Heart left ventricle (tissue), 16 donors: ENCODE measurements at regions of chr12 and their contacts with region 1.

Region 1: GRCh38 chr12:93591137-93591868 is 18.8 kb downstream of the SOCS2 start:
- DNase-seq: peak; percentile 87 to 91 (median 89)
- ATAC-seq: peak; percentile 81 to 97 (median 94)
- H3K4me3 ChIP-seq: peak overlapping the region; percentile 38 to 72 (median 59)
- H3K27ac ChIP-seq: peak overlapping the region; percentile 74 to 96 (median 88)
- H3K4me1 ChIP-seq: peaks cover 0 to 48% (median 18%) of the 10 kb centered on the region in 12 donors
- H3K27me3 ChIP-seq: no peaks in the 10 kb centered on the region
- CTCF ChIP-seq: no peak
- POLR2A ChIP-seq: peak in 1 of 2 donors; percentile 72

Region 2: GRCh38 chr12:93577222-93577795 is 14.0 kb before region 1 on chr12:
- intact Hi-C with region 1: loop called in 8 of 10 experiments (anchors 1 to 2 kb)
- DNase-seq: no peak
- ATAC-seq: no peak
- H3K4me3 ChIP-seq: peak overlapping the region in 2 of 12 donors; percentile 66 to 71
- H3K27ac ChIP-seq: peak overlapping the region in 4 of 12 donors; percentile 21 to 98 (median 29)
- H3K4me1 ChIP-seq: peaks cover 0 to 66% (median 41%) of the 10 kb centered on the region in 12 donors
- H3K27me3 ChIP-seq: peaks cover 0 to 26% (median 0%) of the 10 kb centered on the region in 9 donors
- CTCF ChIP-seq: no peak
- POLR2A ChIP-seq: no peak

Region 3: GRCh38 chr12:93677195-93678064 is 86.1 kb after region 1 on chr12 and contains the start of gene CRADD:
- intact Hi-C with region 1: loop called in 7 of 10 experiments (anchors 5 kb)
- DNase-seq: peak; percentile 79 to 90 (median 83)
- ATAC-seq: peak; percentile 86 to 94 (median 92)
- H3K4me3 ChIP-seq: peak within 1 kb of the TSS; percentile 36 to 84 (median 70)
- H3K27ac ChIP-seq: peak within 1 kb of the TSS; percentile 84 to 100 (median 97)
- H3K4me1 ChIP-seq: peaks cover 0 to 52% (median 24%) of the 10 kb centered on the region in 12 donors
- H3K27me3 ChIP-seq: no peaks in the 10 kb centered on the region
- CTCF ChIP-seq: no peak
- POLR2A ChIP-seq: peak in 1 of 2 donors; percentile 73
- total RNA-seq, gene CRADD: 40.1 to 100 (median 56.1) TPM

Region 4: GRCh38 chr12:93742110-93742934 is 151.0 kb after region 1 on chr12:
- intact Hi-C with region 1: loop called in 9 of 10 experiments (anchors 2 to 5 kb)
- DNase-seq: peak; percentile 73 to 85 (median 80)
- ATAC-seq: peak; percentile 78 to 97 (median 92)
- H3K4me3 ChIP-seq: peak overlapping the region; percentile 33 to 70 (median 64)
- H3K27ac ChIP-seq: peak overlapping the region; percentile 88 to 95 (median 93)
- H3K4me1 ChIP-seq: peaks cover 0 to 85% (median 60%) of the 10 kb centered on the region in 12 donors
- H3K27me3 ChIP-seq: no peaks in the 10 kb centered on the region
- CTCF ChIP-seq: peak in 9 of 12 donors; percentile 17 to 54 (median 36)
- POLR2A ChIP-seq: peak in 1 of 2 donors; percentile 13

Region 5: GRCh38 chr12:93759512-93760081 is 168.3 kb after region 1 on chr12:
- intact Hi-C with region 1: loop called in 1 of 10 experiments (anchors 5 kb)
- DNase-seq: no peak
- ATAC-seq: peak in 1 of 4 donors; percentile 11
- H3K4me3 ChIP-seq: no peak overlapping the region
- H3K27ac ChIP-seq: peak overlapping the region in 8 of 12 donors; percentile 5 to 46 (median 20)
- H3K4me1 ChIP-seq: peaks cover 0 to 59% (median 42%) of the 10 kb centered on the region in 12 donors
- H3K27me3 ChIP-seq: no peaks in the 10 kb centered on the region
- CTCF ChIP-seq: no peak
- POLR2A ChIP-seq: no peak

Region 6: DNA sequence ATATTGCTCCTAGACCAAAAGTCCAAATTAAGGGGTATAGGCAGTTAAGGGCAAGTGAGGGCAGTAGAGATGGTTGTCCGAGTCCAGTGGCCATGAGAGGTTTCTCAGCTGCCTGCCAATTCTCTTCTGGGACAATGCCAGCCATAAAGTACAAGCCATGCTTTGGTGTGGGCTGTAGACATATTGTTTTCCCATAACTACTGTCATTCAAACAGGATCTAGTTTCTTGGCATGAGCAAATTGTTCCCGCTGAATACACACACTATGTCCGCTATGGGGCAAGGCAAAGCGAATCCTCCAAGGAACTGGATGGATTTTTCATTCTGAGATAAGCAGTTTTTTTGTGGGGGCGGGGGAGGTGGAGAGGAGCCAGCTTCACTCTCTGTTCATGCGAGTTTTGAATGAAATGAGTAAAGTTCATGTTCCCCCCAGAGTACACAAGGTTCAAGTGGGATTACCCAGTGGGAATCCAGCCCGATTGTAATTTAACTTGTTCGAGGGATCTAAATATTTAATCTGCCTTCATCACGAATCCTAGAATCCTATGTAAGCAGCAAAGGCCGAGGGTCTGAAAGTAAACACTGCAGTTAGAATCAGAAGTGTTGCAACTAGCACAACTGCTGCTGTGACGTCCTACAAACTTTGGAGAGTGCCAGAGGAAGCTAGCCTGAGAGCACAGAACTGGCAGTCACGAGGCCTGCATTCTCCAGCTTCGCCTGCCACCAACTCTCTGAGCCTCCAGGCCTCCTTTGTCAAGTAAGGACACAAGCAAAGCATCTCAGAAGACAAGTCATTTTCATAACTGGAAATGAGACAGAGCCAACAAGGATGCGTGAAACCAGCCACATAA is 222.9 kb after region 1 on chr12:
- intact Hi-C with region 1: loop called in 1 of 10 experiments (anchors 5 kb)
- DNase-seq: peak; percentile 79 to 91 (median 80)
- ATAC-seq: peak; percentile 91 to 93 (median 92)
- H3K4me3 ChIP-seq: peak overlapping the region in 6 of 12 donors; percentile 6 to 37 (median 14)
- H3K27ac ChIP-seq: peak overlapping the region; percentile 81 to 95 (median 88)
- H3K4me1 ChIP-seq: peaks cover 9 to 68% (median 50%) of the 10 kb centered on the region in 12 donors
- H3K27me3 ChIP-seq: no peaks in the 10 kb centered on the region
- CTCF ChIP-seq: no peak
- POLR2A ChIP-seq: no peak